Sigmoid colon (tissue), 7 donors: ENCODE measurements at regions of chr3 and their contacts with region 1.

Region 1: GRCh38 chr3:10164546-10165393 is at the start of gene IRAK2:
- DNase-seq: peak; percentile 90
- H3K4me3 ChIP-seq: peak within 1 kb of the TSS; percentile 72 to 93 (median 80)
- H3K27ac ChIP-seq: peak within 1 kb of the TSS; percentile 70 to 81 (median 76)
- H3K4me1 ChIP-seq: peaks cover 0 to 19% (median 6%) of the 10 kb centered on the region in 4 donors
- H3K27me3 ChIP-seq: no peaks in the 10 kb centered on the region
- CTCF ChIP-seq: peak; percentile 61 to 99 (median 76)
- EP300 ChIP-seq: no peak
- POLR2A ChIP-seq: no peak
- total RNA-seq, gene IRAK2: 1.1 to 6.1 (median 3.7) TPM

Region 2: DNA sequence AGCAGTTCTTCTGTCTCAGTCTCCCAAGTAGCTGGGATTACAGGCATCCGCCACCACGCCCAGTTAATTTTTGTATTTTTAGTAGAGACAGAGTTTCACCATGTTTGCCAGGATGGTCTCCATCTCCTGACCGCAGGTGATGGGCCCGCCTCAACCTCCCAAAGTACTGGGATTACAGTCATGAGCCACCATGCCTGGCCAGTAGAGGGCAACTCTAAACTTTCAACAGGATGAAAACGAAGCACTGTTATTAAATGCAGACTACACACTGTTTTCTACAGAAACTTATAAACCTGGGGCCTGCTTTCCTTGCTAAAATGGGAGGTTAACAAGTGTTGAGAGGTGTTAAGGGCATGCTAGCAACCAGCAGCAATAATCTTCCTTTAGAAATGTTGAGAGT is 364.2 kb before region 1 on chr3:
- intact Hi-C with region 1: no loop called
- DNase-seq: no peak
- H3K4me3 ChIP-seq: no peak overlapping the region
- H3K27ac ChIP-seq: no peak overlapping the region
- H3K4me1 ChIP-seq: peaks cover 0 to 3% (median under 1%) of the 10 kb centered on the region in 4 donors
- H3K27me3 ChIP-seq: no peaks in the 10 kb centered on the region
- CTCF ChIP-seq: no peak
- EP300 ChIP-seq: no peak
- POLR2A ChIP-seq: no peak

Region 3: GRCh38 chr3:10026084-10026890 is 138.5 kb before region 1 on chr3 and contains the start of gene FANCD2:
- intact Hi-C with region 1: no loop called
- DNase-seq: peak; percentile 92
- H3K4me3 ChIP-seq: peak within 1 kb of the TSS; percentile 73 to 93 (median 83)
- H3K27ac ChIP-seq: peak within 1 kb of the TSS; percentile 77 to 85 (median 81)
- H3K4me1 ChIP-seq: peaks cover 0 to 28% (median 25%) of the 10 kb centered on the region in 4 donors
- H3K27me3 ChIP-seq: no peaks in the 10 kb centered on the region
- CTCF ChIP-seq: no peak
- EP300 ChIP-seq: peak in 1 of 4 donors; percentile 60
- POLR2A ChIP-seq: peak; percentile 74 to 78
- total RNA-seq, gene FANCD2: 1.5 to 5.8 (median 3.1) TPM

Region 4: DNA sequence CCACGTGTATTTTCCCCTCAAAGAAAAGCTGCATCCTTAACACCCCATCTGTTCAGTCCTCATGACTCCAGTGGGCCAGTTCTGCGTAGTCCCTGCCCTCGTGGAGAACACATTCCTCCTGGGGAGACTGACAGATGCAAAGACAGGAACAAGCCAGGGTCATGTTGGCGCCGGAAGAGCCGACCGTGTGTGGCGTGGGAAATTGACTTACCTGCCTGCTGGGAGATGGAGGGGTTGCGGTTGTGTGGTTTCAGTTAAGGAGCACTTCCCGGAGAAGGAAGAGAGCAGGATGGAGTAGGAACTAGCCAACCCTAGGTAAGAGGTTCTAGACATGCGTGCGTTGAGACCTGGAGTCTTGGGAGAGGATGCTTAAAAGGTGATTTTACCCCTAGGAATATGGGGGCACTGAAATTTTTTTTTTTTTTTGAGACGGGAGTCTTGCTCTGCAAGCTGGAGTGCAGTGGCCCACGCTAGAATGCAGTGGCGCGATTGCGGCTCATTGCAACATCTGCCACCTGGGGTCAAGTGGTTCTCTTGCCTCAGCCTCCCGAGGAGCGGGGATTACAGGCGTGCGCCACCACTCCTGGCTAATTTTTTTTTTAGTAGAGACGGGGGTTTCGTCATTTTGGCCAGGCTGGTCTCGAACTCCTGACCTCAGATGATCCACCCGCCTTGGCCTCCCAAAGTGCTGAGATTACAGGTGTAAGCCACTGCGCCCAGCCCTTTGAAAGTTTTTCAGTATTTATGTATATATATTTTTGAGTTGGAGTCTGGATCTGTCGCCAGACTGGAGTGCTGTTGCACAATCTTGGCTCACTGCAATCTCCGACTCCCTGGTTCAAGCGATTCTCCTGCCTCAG is 21.8 kb before region 1 on chr3:
- intact Hi-C with region 1: loop called (anchors 2 kb)
- DNase-seq: no peak
- H3K4me3 ChIP-seq: peak overlapping the region; percentile 53 to 77 (median 65)
- H3K27ac ChIP-seq: peak overlapping the region; percentile 92 to 95 (median 94)
- H3K4me1 ChIP-seq: peaks cover 0 to 41% (median 31%) of the 10 kb centered on the region in 4 donors
- H3K27me3 ChIP-seq: no peaks in the 10 kb centered on the region
- CTCF ChIP-seq: no peak
- EP300 ChIP-seq: no peak
- POLR2A ChIP-seq: no peak